ENCODE measurements at regions of chr3 and their contacts with region 1.

Region 1: DNA sequence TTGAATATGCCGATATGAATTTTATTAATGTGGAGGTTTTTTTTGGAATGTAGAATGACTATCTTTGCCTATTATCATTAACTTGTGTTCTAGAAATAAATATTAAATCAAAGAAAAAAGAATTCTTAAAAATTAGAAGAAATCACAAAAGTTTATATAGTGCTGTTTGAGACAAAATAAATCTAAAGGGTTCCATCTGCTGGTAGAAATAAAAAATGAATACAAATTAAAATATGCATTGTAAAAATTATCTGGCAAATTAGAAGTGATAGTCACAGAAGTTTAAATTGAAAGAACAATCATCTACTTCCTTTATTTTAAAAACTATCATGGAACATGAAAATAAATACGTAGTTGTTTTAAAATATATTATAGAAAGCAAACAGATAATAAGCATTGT is 22.7 kb upstream of the ZBTB20 start:
- DNase-seq: peak in 2 of 14 experiments; percentile 29 to 41
- ATAC-seq: no peak
- H3K4me3 ChIP-seq: no peak overlapping the region
- H3K4me3 Mint-ChIP-seq: no peak overlapping the region
- H3K27ac ChIP-seq: no peak overlapping the region
- H3K27ac Mint-ChIP-seq: no peak overlapping the region
- H3K4me1 ChIP-seq: peaks cover 11% of the 10 kb centered on the region
- H3K4me1 Mint-ChIP-seq: peaks cover 13% of the 10 kb centered on the region
- H3K27me3 ChIP-seq: no peaks in the 10 kb centered on the region
- H3K27me3 Mint-ChIP-seq: no peaks in the 10 kb centered on the region
- CTCF ChIP-seq: peak; percentile 73

Region 2: DNA sequence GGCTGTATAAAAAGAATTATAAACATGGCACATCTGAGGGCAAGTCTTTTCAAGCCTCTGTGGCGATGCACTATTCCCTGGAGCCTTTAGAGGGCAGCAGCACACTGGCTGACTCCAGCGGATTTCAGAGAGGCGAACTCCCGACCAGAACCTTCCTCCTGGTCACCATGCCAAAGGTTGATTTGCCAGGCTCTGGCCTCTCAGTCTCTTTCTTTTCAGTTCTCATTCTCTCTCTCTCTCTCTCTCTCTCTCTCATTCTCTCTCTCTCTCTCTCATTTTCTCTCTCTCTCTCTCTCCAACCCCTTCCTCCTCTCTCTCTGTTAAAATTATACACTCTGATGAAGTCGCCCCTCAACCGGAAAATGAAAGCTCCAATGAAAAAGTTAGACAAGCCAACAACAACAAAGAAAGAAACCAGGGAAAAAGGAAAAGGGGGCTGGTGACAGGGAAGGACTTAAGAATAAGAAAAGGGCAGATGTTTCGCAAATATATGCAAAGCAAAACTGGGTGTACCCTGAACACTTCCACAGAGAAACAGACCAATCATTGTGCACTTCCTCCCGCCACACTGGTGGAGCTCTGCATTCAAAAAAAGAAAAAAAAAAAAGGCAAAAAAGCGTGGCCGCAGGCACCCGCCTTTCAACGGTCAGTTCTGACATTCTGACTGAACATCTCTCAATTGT is 785.8 kb before region 1 on chr3:
- CTCF ChIA-PET with region 1: no interaction called
- POLR2A ChIA-PET with region 1: interaction called, 4 read pairs
- intact Hi-C with region 1: loop called in 1 of 2 experiments (anchors 5 kb)
- DNase-seq: peak; percentile 26 to 78 (median 50)
- ATAC-seq: peak; percentile 97
- H3K4me3 ChIP-seq: peak overlapping the region; percentile 27
- H3K4me3 Mint-ChIP-seq: peak overlapping the region; percentile 58
- H3K27ac ChIP-seq: no peak overlapping the region
- H3K27ac Mint-ChIP-seq: no peak overlapping the region
- H3K4me1 ChIP-seq: peaks cover 11% of the 10 kb centered on the region
- H3K4me1 Mint-ChIP-seq: peaks cover 21% of the 10 kb centered on the region
- H3K27me3 ChIP-seq: no peaks in the 10 kb centered on the region
- H3K27me3 Mint-ChIP-seq: no peaks in the 10 kb centered on the region
- CTCF ChIP-seq: peak; percentile 89

Region 3: GRCh38 chr3:114827495-114827894 is 342.3 kb before region 1 on chr3:
- CTCF ChIA-PET with region 1: no interaction called
- POLR2A ChIA-PET with region 1: no interaction called
- intact Hi-C with region 1: loop called in 1 of 2 experiments (anchors 10 kb)
- DNase-seq: peak in 3 of 14 experiments; percentile 36 to 47 (median 38)
- ATAC-seq: no peak
- H3K4me3 ChIP-seq: no peak overlapping the region
- H3K4me3 Mint-ChIP-seq: no peak overlapping the region
- H3K27ac ChIP-seq: no peak overlapping the region
- H3K27ac Mint-ChIP-seq: no peak overlapping the region
- H3K4me1 ChIP-seq: no peaks in the 10 kb centered on the region
- H3K4me1 Mint-ChIP-seq: peaks cover 6% of the 10 kb centered on the region
- H3K27me3 ChIP-seq: no peaks in the 10 kb centered on the region
- H3K27me3 Mint-ChIP-seq: no peaks in the 10 kb centered on the region
- CTCF ChIP-seq: peak; percentile 17

Region 4: DNA sequence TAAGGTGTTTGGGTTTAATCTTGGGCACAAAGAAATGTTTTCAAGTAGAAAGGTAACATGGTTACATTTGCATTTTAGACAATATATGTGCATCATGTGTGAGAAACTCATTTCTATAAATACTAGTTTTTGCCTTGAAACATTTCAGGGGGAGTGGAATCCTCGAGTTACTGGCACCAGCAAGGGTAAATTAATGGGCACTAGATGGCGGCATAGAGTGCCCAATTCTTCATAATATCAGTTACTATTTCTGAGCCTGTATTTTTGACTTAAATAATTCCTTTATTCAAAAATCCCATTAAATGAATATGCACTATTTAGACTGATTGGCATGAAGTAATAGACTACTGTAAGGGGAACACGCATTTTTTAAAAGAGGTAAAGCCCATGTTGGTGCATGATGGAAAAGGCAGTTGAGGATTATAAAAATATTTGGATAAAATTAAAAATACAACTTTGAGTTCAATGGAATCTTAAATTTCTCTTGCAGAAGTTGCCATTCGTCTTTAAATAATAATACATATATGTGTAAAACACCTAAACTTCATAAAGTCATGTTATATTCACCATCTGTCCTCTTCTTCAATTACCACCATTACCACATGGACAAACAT is 129.0 kb before region 1 on chr3:
- CTCF ChIA-PET with region 1: no interaction called
- POLR2A ChIA-PET with region 1: interaction called, 3 read pairs
- intact Hi-C with region 1: loop called (anchors 2 kb)
- DNase-seq: peak in 13 of 14 experiments; percentile 3 to 66 (median 25)
- ATAC-seq: peak; percentile 60
- H3K4me3 ChIP-seq: no peak overlapping the region
- H3K4me3 Mint-ChIP-seq: no peak overlapping the region
- H3K27ac ChIP-seq: no peak overlapping the region
- H3K27ac Mint-ChIP-seq: no peak overlapping the region
- H3K4me1 ChIP-seq: no peaks in the 10 kb centered on the region
- H3K4me1 Mint-ChIP-seq: peaks cover 19% of the 10 kb centered on the region
- H3K27me3 ChIP-seq: no peaks in the 10 kb centered on the region
- H3K27me3 Mint-ChIP-seq: no peaks in the 10 kb centered on the region
- CTCF ChIP-seq: peak; percentile 83

Region 5: DNA sequence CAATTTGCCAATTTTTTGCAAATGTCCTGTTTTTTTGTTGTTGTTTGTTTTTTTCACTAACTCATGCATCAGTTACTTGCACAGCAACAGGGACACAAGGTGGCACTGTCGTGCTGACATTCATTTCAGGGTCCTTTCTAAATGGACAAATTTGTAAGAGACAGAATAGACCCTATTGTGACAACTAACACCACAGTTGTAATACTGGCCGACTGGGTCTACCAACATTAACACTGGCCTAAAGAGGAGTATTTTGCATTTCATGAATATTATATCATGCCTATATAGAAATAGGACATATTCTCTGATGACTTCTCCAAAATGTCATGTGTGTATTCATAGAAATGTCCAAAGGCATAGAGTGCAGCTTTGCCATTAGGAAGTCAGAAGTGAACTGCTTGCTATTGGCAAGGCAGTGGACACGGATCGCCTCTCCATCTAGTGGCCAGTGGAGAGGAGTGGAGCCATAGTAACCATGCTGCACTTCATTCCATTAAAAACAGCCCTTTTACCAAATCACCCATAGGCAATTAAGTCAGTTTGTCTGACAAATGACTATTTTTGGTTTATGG is 77.5 kb before region 1 on chr3:
- CTCF ChIA-PET with region 1: interaction called, 14 read pairs
- POLR2A ChIA-PET with region 1: interaction called, 4 read pairs
- intact Hi-C with region 1: loop called (anchors 1 kb)
- DNase-seq: peak; percentile 14 to 79 (median 56)
- ATAC-seq: peak; percentile 67
- H3K4me3 ChIP-seq: no peak overlapping the region
- H3K4me3 Mint-ChIP-seq: no peak overlapping the region
- H3K27ac ChIP-seq: no peak overlapping the region
- H3K27ac Mint-ChIP-seq: no peak overlapping the region
- H3K4me1 ChIP-seq: no peaks in the 10 kb centered on the region
- H3K4me1 Mint-ChIP-seq: peaks cover 68% of the 10 kb centered on the region
- H3K27me3 ChIP-seq: no peaks in the 10 kb centered on the region
- H3K27me3 Mint-ChIP-seq: no peaks in the 10 kb centered on the region
- CTCF ChIP-seq: peak; percentile 81

Region 6: DNA sequence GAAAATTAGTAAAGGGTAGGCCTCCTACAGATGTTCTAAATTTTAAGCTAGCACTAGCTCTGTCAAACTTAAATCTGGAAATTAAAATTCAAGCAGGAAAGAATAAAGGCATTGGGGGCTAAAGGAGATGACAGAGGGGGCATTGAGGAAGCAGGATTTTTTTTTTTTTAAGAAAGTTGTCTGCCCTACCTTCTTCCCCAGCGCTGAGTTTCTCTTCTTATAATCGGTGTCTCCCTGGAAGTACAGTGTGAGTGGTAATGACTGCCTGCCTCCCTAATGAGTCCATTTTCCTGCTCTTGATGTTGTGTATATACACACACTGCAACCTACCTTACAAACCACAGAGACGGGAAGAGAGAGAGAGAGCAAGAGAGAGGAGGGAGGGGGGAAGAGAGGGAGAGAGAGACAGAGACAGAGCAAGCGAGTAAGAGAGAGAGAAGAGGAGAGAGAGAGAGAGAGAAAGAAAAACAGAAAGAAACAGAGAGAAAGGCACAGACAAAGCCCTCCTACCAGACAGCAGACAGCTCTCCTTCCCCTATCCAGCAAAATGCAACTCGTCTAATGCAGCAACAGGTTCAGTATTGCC is 69.7 kb before region 1 on chr3:
- CTCF ChIA-PET with region 1: interaction called, 14 read pairs
- POLR2A ChIA-PET with region 1: interaction called, 36 read pairs
- intact Hi-C with region 1: no loop called
- DNase-seq: peak in 9 of 14 experiments; percentile 3 to 82 (median 28)
- ATAC-seq: peak; percentile 87
- H3K4me3 ChIP-seq: peak overlapping the region; percentile 46
- H3K4me3 Mint-ChIP-seq: peak overlapping the region; percentile 89
- H3K27ac ChIP-seq: peak overlapping the region in 1 of 2 donors; percentile 3
- H3K27ac Mint-ChIP-seq: peak overlapping the region; percentile 86
- H3K4me1 ChIP-seq: peaks cover 2% of the 10 kb centered on the region
- H3K4me1 Mint-ChIP-seq: peaks cover 66% of the 10 kb centered on the region
- H3K27me3 ChIP-seq: no peaks in the 10 kb centered on the region
- H3K27me3 Mint-ChIP-seq: no peaks in the 10 kb centered on the region
- CTCF ChIP-seq: no peak

Measured in CD4-positive, alpha-beta T cell (primary cell).